AG04449 (cell line): ENCODE measurements at regions of chr1 and their contacts with region 1.

Region 1: DNA sequence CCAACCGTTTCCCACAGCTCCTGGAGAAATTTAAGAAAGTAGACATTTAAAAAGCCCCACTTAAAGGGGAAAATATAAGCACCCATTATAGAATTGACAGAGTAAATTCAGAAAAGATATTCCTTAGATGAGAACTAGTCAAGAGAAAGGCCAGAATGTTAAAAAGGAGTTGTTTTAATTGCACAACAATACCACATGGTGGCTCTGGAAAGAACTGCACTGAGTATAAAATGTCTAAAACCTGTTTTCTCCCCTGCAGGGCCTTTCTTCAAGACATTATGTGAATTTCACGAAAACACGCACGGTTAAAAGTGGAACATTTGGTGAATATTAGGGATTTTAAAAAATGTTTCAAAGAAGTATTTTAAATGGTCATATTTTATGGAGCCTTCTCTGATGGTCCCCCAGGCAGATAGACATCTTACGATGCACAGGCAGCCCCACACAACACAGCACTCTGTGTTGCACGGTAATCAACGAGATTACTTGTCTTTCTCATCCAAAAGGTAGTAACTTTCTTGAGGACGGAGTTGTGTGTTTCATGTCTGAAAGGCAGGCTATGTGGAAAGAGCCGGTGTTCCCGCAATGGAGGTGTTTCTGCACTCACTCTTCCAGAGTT is 101.9 kb downstream of the PRRX1 start:
- DNase-seq: peak; percentile 17
- H3K4me3 ChIP-seq: no peak overlapping the region
- CTCF ChIP-seq: peak; percentile 55

Region 2: GRCh38 chr1:170010443-170010842 is 755.4 kb before region 1 on chr1:
- CTCF ChIA-PET with region 1: interaction called, 14 read pairs
- POLR2A ChIA-PET with region 1: no interaction called
- DNase-seq: no peak
- H3K4me3 ChIP-seq: no peak overlapping the region
- CTCF ChIP-seq: peak; percentile 33

Region 3: DNA sequence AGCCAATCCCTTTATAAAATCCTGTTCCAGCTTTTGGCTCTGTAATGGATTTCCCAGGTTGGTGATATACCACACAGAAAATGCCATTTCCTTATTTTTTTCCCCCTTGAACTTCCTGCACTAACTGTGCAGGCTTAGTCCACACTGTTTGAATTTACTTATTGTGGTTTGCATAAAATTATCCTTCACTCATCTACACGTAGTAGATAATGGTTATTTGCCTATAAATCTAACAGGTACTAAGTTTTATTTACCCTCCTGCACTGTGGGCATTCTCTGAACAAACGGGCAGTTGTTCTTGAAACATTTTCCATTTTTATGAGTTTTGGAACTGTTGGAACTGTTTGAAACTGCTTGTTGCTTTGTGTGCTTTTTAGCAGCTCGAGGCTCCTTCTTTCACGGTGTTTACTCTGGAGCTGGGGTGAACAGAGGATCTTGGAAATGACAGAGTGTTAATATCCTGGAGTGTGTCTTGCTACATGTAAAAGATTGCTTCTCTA is 668.3 kb before region 1 on chr1:
- CTCF ChIA-PET with region 1: no interaction called
- POLR2A ChIA-PET with region 1: no interaction called
- DNase-seq: no peak
- H3K4me3 ChIP-seq: no peak overlapping the region
- CTCF ChIP-seq: no peak

Region 4: GRCh38 chr1:170537798-170538503 is 227.9 kb before region 1 on chr1:
- CTCF ChIA-PET with region 1: no interaction called
- POLR2A ChIA-PET with region 1: no interaction called
- DNase-seq: no peak
- H3K4me3 ChIP-seq: no peak overlapping the region
- CTCF ChIP-seq: no peak

Region 5: GRCh38 chr1:170674239-170674638 is 91.6 kb before region 1 on chr1:
- CTCF ChIA-PET with region 1: interaction called, 13 read pairs
- POLR2A ChIA-PET with region 1: no interaction called
- DNase-seq: no peak
- H3K4me3 ChIP-seq: no peak overlapping the region
- CTCF ChIP-seq: no peak